ENCODE measurements at regions of chr13 and their contacts with region 1.

Region 1: GRCh38 chr13:110412132-110412914 is 105.2 kb downstream of the COL4A2 start:
- DNase-seq: peak; percentile 67 to 92 (median 74)
- H3K4me3 ChIP-seq: no peak overlapping the region
- H3K4me3 Mint-ChIP-seq: peak overlapping the region in 1 of 2 donors; percentile 26
- H3K27ac ChIP-seq: no peak overlapping the region
- H3K27ac Mint-ChIP-seq: no peak overlapping the region
- H3K4me1 ChIP-seq: no peaks in the 10 kb centered on the region
- H3K4me1 Mint-ChIP-seq: peaks cover 7% of the 10 kb centered on the region
- H3K27me3 ChIP-seq: peaks cover 2 to 38% of the 10 kb centered on the region in 2 donors
- H3K27me3 Mint-ChIP-seq: peaks cover 22 to 59% (median 29%) of the 10 kb centered on the region in 3 donors
- CTCF ChIP-seq: peak; percentile 84

Region 2: GRCh38 chr13:108961542-108962125 is 1450.7 kb before region 1 on chr13:
- intact Hi-C with region 1: loop called (anchors 5 to 10 kb)
- DNase-seq: peak; percentile 38 to 82 (median 69)
- H3K4me3 ChIP-seq: no peak overlapping the region
- H3K4me3 Mint-ChIP-seq: no peak overlapping the region
- H3K27ac ChIP-seq: no peak overlapping the region
- H3K27ac Mint-ChIP-seq: no peak overlapping the region
- H3K4me1 ChIP-seq: no peaks in the 10 kb centered on the region
- H3K4me1 Mint-ChIP-seq: peaks cover 4% of the 10 kb centered on the region
- H3K27me3 ChIP-seq: no peaks in the 10 kb centered on the region
- H3K27me3 Mint-ChIP-seq: peaks cover 0 to 2% (median 1%) of the 10 kb centered on the region in 3 donors
- CTCF ChIP-seq: peak; percentile 88

Region 3: DNA sequence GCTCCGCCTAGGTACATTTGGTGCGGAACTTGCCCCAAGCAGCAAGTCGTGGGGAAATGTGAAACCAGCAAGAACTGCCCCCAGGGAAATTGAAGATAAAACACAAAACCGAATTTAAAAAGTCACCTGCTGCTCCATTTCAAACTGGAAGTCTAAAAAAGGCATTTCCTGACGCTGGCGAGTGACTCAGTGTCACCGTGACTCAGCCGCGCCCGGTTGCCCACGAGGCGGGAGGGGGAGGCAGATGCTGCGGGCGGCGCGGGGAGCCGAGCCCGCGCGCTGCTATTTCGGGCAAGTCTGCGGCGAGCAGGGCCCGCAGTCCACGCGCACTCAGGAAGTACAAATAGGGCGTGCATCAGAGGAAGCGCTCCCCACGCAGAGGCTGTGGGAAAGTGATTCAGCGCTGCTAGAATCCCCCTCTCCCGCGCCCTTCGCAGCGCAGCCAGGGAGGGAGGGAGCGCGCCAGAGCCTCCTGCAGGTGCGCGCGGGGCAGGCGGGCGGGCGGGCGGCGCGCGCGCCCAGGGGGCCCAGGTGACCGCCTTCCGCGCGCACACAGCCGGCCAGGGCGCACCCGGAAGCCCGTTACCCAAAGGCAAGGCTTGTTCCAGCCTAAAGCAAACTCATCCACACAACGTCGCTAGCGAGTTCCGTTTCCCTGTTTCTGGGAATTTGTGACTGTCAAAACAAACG is 274.2 kb before region 1 on chr13:
- intact Hi-C with region 1: loop called in 1 of 2 experiments (anchors 10 kb)
- DNase-seq: peak; percentile 90 to 97 (median 93)
- H3K4me3 ChIP-seq: peak overlapping the region; percentile 63 to 79 (median 74)
- H3K4me3 Mint-ChIP-seq: peak overlapping the region; percentile 82 to 92
- H3K27ac ChIP-seq: peak overlapping the region; percentile 95 to 98
- H3K27ac Mint-ChIP-seq: peak overlapping the region; percentile 94 to 98 (median 97)
- H3K4me1 ChIP-seq: peaks cover 17 to 19% of the 10 kb centered on the region in 2 donors
- H3K4me1 Mint-ChIP-seq: peaks cover 20% of the 10 kb centered on the region
- H3K27me3 ChIP-seq: no peaks in the 10 kb centered on the region
- H3K27me3 Mint-ChIP-seq: peaks cover 0 to 5% (median 2%) of the 10 kb centered on the region in 3 donors
- CTCF ChIP-seq: no peak

Region 4: GRCh38 chr13:110220471-110220870 is 191.9 kb before region 1 on chr13:
- intact Hi-C with region 1: loop called (anchors 2 to 5 kb)
- DNase-seq: peak; percentile 27 to 45 (median 34)
- H3K4me3 ChIP-seq: no peak overlapping the region
- H3K4me3 Mint-ChIP-seq: peak overlapping the region in 1 of 2 donors; percentile 44
- H3K27ac ChIP-seq: no peak overlapping the region
- H3K27ac Mint-ChIP-seq: peak overlapping the region in 1 of 7 donors; percentile 38
- H3K4me1 ChIP-seq: peaks cover 6 to 8% of the 10 kb centered on the region in 2 donors
- H3K4me1 Mint-ChIP-seq: peaks cover 5% of the 10 kb centered on the region
- H3K27me3 ChIP-seq: peaks cover 0 to 8% of the 10 kb centered on the region in 2 donors
- H3K27me3 Mint-ChIP-seq: peaks cover 14 to 18% (median 14%) of the 10 kb centered on the region in 3 donors
- CTCF ChIP-seq: no peak

Region 5: DNA sequence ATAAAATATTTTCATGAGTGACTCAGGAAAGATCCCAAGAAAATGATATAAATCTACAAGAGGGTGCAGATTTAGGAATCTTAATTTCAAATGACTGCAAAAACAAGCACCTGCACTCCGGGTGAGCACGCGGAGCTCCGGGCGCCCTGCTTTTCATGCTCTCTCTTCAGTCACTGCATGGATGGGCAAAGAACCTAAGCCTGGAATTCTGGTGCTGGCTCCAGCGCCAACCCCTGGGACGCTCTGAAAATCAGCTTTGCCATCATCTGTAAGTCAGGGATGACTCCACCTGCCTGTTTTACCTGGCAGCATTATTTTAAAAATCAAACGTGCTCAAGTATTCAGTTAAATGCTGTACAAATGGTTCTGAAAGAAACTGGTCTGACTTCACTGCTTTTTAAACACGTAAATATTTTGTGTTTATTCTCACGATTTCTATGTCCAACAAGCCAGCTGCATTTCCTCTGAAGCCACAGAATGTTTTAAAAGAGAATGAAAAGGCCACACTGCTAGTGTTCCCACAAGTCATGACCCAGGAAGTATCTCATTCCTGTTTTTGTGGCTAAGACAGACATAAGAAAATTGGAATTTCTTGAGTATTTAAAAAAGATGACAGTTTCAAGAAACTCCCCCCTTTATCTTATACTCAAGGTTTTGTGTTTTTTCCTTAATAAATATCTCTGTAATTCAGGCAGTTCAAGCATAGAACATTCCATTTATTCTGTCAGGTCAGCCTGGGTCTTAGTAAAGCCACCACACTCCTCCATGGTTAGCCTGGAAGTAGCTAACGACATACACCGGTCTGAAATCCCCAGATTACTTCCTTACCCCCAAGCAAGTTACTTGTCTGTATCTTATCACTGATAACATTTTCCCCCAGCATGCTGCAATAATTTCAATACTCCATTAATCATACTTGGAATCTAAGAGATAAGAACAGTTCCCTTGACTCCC is 186.4 kb before region 1 on chr13:
- intact Hi-C with region 1: loop called (anchors 2 to 5 kb)
- DNase-seq: no peak
- H3K4me3 ChIP-seq: no peak overlapping the region
- H3K4me3 Mint-ChIP-seq: peak overlapping the region in 1 of 2 donors; percentile 48
- H3K27ac ChIP-seq: no peak overlapping the region
- H3K27ac Mint-ChIP-seq: no peak overlapping the region
- H3K4me1 ChIP-seq: no peaks in the 10 kb centered on the region
- H3K4me1 Mint-ChIP-seq: no peaks in the 10 kb centered on the region
- H3K27me3 ChIP-seq: no peaks in the 10 kb centered on the region
- H3K27me3 Mint-ChIP-seq: peaks cover 4 to 13% (median 12%) of the 10 kb centered on the region in 3 donors
- CTCF ChIP-seq: no peak

Region 6: DNA sequence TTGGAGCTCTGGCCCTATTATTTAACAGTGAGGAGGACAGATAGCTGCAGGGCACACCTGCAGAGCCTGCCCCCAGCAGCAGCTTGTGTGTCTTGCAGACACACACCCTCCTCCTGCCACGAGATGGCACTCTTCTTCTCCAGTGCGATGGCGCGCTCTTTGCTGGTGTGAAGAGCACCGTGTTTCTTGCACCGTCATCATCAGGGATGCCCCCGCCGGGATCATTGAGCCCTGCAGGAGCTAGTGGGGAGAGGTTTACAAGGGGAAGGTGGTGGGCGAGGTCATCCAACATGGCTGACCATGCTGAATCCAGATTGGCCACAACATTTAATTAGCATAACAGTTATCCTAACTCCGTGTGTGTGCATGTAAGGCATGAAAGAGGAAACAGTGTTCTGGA is 43.6 kb after region 1 on chr13:
- intact Hi-C with region 1: no loop called
- DNase-seq: peak; percentile 58 to 85 (median 66)
- H3K4me3 ChIP-seq: peak overlapping the region in 1 of 3 experiments; percentile 39
- H3K4me3 Mint-ChIP-seq: peak overlapping the region; percentile 53 to 80
- H3K27ac ChIP-seq: no peak overlapping the region
- H3K27ac Mint-ChIP-seq: peak overlapping the region in 4 of 7 donors; percentile 16 to 87 (median 30)
- H3K4me1 ChIP-seq: peaks cover 6 to 7% of the 10 kb centered on the region in 2 donors
- H3K4me1 Mint-ChIP-seq: peaks cover 7% of the 10 kb centered on the region
- H3K27me3 ChIP-seq: no peaks in the 10 kb centered on the region
- H3K27me3 Mint-ChIP-seq: peaks cover 6 to 15% (median 12%) of the 10 kb centered on the region in 3 donors
- CTCF ChIP-seq: peak; percentile 90

Measured in CD14-positive monocyte (primary cell).